GM12878 (cell line): ENCODE measurements at regions of chr3 and their contacts with region 1.

Region 1: DNA sequence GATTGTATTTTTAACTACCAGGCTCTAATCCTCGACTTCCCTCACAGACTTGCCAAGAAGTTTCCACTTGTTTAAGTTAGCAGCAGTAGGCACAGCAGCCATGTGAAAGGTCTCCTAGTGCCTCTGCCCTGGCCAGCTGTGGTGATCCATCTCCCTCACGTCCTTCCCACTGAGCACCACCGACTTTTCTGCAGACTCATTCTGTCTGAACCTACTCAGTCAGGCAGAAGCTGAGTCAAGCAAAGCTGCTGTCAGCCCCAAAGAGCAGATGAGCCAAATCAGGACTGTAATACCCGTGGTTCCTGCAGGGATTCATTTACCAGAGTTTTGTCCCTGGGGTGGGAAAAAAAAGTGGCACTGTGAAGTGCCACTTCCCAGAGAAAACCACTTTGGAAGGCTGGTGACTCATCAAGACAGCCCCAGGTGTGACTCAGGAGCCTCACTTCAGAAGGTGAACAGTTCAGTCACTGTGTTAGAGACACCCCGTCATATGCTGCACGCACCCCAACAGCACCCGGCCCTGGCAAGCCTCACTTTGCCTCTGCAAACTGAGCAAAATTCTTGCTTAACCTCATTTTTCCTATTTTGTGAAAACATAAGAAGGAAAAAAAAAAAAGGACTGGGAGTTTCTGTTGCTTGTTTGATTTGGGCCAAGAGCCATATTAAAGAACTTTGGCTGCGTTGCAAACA is 76.0 kb downstream of the WWTR1 start:
- DNase-seq: no peak
- ATAC-seq: peak; percentile 57
- H3K4me3 ChIP-seq: peak overlapping the region; percentile 52; the same call in 1 of the 2 replicates
- H3K27ac ChIP-seq: peak overlapping the region; percentile 63
- H3K4me1 ChIP-seq: peaks cover 73% of the 10 kb centered on the region
- H3K27me3 ChIP-seq: no peaks in the 10 kb centered on the region
- CTCF ChIP-seq: no peak
- EP300 ChIP-seq: 0 out of 4 replicates have a peak, but pooled peaks of 1 of the 2 experiments have one; percentile 21
- POLR2A ChIP-seq: no peak
- RAD21 ChIP-seq: no peak

Region 2: DNA sequence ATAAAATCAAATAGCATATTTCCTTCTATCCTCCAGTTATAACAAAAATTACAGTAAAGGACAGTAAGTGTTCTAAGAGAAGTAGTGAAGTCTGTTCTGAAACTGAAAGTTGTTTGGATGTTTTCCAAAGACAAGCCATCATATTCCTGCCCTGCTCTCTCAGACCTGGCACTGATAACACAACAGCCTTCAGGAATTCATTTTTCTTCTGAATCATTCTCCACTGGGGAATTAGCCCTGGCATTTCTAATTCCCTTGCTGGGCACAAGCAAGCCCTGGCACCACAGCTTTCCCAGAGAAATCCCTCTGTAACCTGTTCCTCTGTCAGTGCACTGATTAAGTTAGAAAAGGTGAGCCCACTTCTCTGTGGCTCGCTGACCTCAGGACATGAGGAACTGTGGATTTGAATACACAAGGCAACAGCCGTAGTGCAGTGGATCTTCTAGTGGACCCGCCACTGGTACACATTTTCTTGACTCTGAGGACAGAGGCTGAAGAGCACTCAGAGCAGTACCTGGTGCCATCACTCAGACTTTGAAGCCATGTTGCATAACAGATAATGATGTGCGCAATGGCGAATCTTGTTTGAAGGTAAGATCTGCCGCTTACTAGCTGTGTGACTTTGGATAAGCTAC is 14.4 kb after region 1 on chr3:
- CTCF ChIA-PET with region 1: interaction called, 87 read pairs
- POLR2A ChIA-PET with region 1: interaction called, 26 read pairs
- RAD21 ChIA-PET with region 1: interaction called, 117 read pairs
- SMC1A ChIA-PET with region 1: interaction called, 505 read pairs
- in situ Hi-C with region 1: no loop called
- intact Hi-C with region 1: no loop called
- DNase-seq: no peak
- ATAC-seq: no peak
- H3K4me3 ChIP-seq: no peak overlapping the region
- H3K27ac ChIP-seq: no peak overlapping the region
- H3K4me1 ChIP-seq: peaks cover 7% of the 10 kb centered on the region
- H3K27me3 ChIP-seq: no peaks in the 10 kb centered on the region
- CTCF ChIP-seq: no peak
- EP300 ChIP-seq: no peak
- POLR2A ChIP-seq: no peak
- RAD21 ChIP-seq: no peak

Region 3: DNA sequence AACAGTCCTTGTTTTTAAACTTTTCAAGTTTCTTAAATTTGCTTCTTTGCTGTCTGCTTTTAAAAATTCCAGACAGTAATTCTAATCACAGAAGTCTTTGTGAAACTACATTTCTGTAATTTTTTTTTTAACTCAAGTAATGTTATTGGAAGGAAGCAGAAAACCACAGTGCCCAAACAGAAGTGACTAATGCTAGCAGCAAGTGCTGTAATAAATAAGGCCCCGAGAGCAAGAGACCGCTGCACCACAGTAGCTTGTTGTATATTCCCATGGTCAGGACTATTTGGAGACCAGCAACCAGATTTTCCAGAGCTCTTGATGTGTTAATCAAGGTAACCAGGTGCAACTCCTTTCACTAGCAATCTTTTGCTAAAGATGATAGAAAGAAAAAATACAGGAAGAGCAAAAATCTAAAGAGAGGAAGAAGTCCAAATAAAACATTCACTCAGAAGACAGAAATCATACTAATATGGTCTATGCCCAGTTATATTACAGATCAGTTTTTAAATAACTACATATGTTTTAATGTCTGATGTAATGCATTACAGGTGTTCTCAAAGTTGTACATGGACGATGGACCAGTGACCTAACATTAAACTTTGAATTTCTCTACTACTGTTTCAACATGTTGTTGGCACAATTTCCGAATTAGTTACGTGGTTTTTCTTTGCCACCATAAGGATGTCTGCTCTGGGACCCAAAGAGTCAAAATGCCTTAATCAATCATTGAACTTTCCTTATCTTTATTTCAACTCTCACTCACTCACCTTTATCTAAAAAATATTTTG is 39.6 kb after region 1 on chr3:
- CTCF ChIA-PET with region 1: no interaction called
- POLR2A ChIA-PET with region 1: interaction called, 21 read pairs
- RAD21 ChIA-PET with region 1: interaction called, 7 read pairs
- SMC1A ChIA-PET with region 1: interaction called, 7 read pairs
- in situ Hi-C with region 1: no loop called
- intact Hi-C with region 1: loop called (anchors 5 kb)
- DNase-seq: no peak
- ATAC-seq: peak; percentile 89
- H3K4me3 ChIP-seq: no peak overlapping the region
- H3K27ac ChIP-seq: no peak overlapping the region
- H3K4me1 ChIP-seq: peaks cover 14% of the 10 kb centered on the region
- H3K27me3 ChIP-seq: no peaks in the 10 kb centered on the region
- CTCF ChIP-seq: no peak
- EP300 ChIP-seq: no peak
- POLR2A ChIP-seq: no peak
- RAD21 ChIP-seq: no peak

Region 4: GRCh38 chr3:149646181-149646766 is 64.4 kb after region 1 on chr3:
- CTCF ChIA-PET with region 1: no interaction called
- POLR2A ChIA-PET with region 1: interaction called, 12 read pairs
- RAD21 ChIA-PET with region 1: interaction called, 3 read pairs
- SMC1A ChIA-PET with region 1: interaction called, 19 read pairs
- in situ Hi-C with region 1: no loop called
- intact Hi-C with region 1: no loop called
- DNase-seq: no peak
- ATAC-seq: peak; percentile 51
- H3K4me3 ChIP-seq: no peak overlapping the region
- H3K27ac ChIP-seq: no peak overlapping the region
- H3K4me1 ChIP-seq: peaks cover 14% of the 10 kb centered on the region
- H3K27me3 ChIP-seq: no peaks in the 10 kb centered on the region
- CTCF ChIP-seq: no peak
- EP300 ChIP-seq: no peak
- POLR2A ChIP-seq: no peak
- RAD21 ChIP-seq: no peak